GM12878 (cell line): ENCODE measurements at regions of chr15 and their contacts with region 1.

Region 1: GRCh38 chr15:97909291-97909891 is 51.1 kb upstream of the ARRDC4 start:
- DNase-seq: no peak
- ATAC-seq: peak; percentile 75
- H3K4me3 ChIP-seq: no peak overlapping the region
- H3K27ac ChIP-seq: no peak overlapping the region
- H3K4me1 ChIP-seq: no peaks in the 10 kb centered on the region
- H3K27me3 ChIP-seq: no peaks in the 10 kb centered on the region
- CTCF ChIP-seq: peak; percentile 65 to 75 (median 73); a peak in 5 of 6 replicates
- EP300 ChIP-seq: no peak
- POLR2A ChIP-seq: no peak
- RAD21 ChIP-seq: peak; percentile 52

Region 2: DNA sequence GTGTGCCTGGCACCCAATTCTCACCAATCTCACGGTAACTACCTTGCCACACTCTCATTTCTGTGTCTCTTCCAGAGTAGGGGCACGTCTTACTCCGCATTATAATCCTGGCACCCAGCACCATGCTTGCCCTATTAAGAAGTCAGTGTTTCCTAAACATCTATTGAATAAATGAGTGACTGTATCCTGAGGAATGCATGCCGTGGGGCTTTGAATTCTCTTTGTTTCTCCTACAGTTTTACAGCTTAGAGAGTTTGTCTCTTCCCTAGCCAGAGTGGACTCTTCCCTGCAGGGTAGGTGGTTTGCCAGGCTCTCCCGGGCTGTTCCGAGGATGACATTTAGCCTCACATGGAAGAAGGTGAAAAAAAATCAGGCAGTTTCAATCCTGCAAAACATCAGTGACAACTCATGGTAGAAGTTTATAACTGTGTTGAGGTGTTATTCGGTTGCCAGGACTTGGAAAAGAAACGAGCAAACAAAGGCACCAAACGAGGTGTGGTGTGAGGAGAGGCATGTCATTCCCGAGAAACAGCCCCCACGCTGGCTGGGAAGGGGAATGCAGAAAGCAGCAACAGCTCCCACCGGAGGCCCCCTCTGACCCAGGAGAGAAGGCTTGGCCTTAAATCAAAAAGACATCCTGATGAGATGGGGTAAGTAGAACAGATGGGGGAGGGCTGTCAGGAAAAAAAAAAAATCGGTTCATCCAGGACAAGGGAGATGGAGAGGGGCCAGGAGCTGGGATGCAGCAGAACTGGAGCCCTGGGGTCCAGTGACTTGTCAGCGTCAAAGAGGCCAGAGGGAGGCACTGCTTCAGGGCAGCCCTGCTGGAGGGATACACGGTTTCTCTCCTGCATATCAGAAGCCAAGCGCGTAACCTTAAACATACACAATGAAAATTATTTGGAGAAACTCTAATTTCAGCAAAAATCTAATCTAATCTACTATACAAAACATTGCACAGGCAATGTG is 117.3 kb before region 1 on chr15:
- CTCF ChIA-PET with region 1: no interaction called
- POLR2A ChIA-PET with region 1: no interaction called
- RAD21 ChIA-PET with region 1: no interaction called
- SMC1A ChIA-PET with region 1: no interaction called
- in situ Hi-C with region 1: no loop called
- intact Hi-C with region 1: no loop called
- DNase-seq: no peak
- ATAC-seq: no peak
- H3K4me3 ChIP-seq: no peak overlapping the region
- H3K27ac ChIP-seq: no peak overlapping the region
- H3K4me1 ChIP-seq: no peaks in the 10 kb centered on the region
- H3K27me3 ChIP-seq: no peaks in the 10 kb centered on the region
- CTCF ChIP-seq: no peak
- EP300 ChIP-seq: no peak
- POLR2A ChIP-seq: no peak
- RAD21 ChIP-seq: no peak

Region 3: GRCh38 chr15:97849183-97849582 is 60.2 kb before region 1 on chr15:
- CTCF ChIA-PET with region 1: no interaction called
- POLR2A ChIA-PET with region 1: no interaction called
- RAD21 ChIA-PET with region 1: no interaction called
- SMC1A ChIA-PET with region 1: no interaction called
- in situ Hi-C with region 1: no loop called
- intact Hi-C with region 1: loop called (anchors 10 kb)
- DNase-seq: no peak
- ATAC-seq: no peak
- H3K4me3 ChIP-seq: no peak overlapping the region
- H3K27ac ChIP-seq: no peak overlapping the region
- H3K4me1 ChIP-seq: no peaks in the 10 kb centered on the region
- H3K27me3 ChIP-seq: no peaks in the 10 kb centered on the region
- CTCF ChIP-seq: no peak
- EP300 ChIP-seq: no peak
- POLR2A ChIP-seq: no peak
- RAD21 ChIP-seq: no peak

Region 4: GRCh38 chr15:98085003-98085639 is 175.7 kb after region 1 on chr15:
- CTCF ChIA-PET with region 1: interaction called, 7 read pairs
- POLR2A ChIA-PET with region 1: no interaction called
- RAD21 ChIA-PET with region 1: no interaction called
- SMC1A ChIA-PET with region 1: no interaction called
- in situ Hi-C with region 1: no loop called
- intact Hi-C with region 1: loop called (anchors 1 kb)
- DNase-seq: no peak
- ATAC-seq: no peak
- H3K4me3 ChIP-seq: no peak overlapping the region
- H3K27ac ChIP-seq: no peak overlapping the region
- H3K4me1 ChIP-seq: no peaks in the 10 kb centered on the region
- H3K27me3 ChIP-seq: no peaks in the 10 kb centered on the region
- CTCF ChIP-seq: peak; percentile 45 to 50 (median 45); a peak in 5 of 6 replicates
- EP300 ChIP-seq: no peak
- POLR2A ChIP-seq: no peak
- RAD21 ChIP-seq: no peak

Region 5: DNA sequence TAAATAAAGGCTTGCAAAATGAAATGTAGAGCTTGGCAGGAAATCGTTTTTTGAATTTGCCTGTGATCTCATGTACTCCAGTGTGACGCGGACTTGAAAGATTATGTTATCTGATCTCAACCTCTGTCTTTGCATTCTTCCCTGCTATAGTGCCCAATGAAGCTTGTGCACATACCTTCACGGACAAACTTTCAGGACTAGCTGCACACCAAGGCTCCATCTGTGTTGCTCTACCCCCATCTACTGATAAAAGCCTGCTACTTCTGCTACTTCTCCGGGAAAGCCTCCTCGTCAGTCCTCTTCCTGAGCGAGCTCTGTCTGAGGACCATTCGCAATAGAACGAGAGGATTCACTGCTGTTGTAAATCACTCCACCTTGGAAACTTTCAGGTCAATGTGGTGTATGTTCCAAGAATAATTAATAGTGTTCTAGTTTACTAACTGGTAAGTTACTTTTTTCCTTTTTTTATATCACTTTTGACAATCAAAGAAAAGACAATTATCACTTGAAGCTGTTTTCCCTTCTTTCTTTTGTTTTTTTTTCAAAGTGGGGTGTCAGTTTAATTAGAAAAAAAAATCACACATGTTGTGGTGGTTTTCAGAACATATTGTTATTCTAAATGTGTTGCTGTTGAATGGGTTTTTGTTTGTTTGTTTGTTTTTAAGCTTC is 268.7 kb after region 1 on chr15:
- CTCF ChIA-PET with region 1: interaction called, 4 read pairs
- POLR2A ChIA-PET with region 1: no interaction called
- RAD21 ChIA-PET with region 1: interaction called, 3 read pairs
- SMC1A ChIA-PET with region 1: no interaction called
- in situ Hi-C with region 1: no loop called
- intact Hi-C with region 1: loop called (anchors 1 kb)
- DNase-seq: no peak
- ATAC-seq: no peak
- H3K4me3 ChIP-seq: no peak overlapping the region
- H3K27ac ChIP-seq: no peak overlapping the region
- H3K4me1 ChIP-seq: no peaks in the 10 kb centered on the region
- H3K27me3 ChIP-seq: no peaks in the 10 kb centered on the region
- CTCF ChIP-seq: peak; percentile 20 to 44 (median 28); a peak in 3 of 6 replicates
- EP300 ChIP-seq: no peak
- POLR2A ChIP-seq: no peak
- RAD21 ChIP-seq: peak; percentile 55

Region 6: GRCh38 chr15:98292442-98293240 is 383.2 kb after region 1 on chr15:
- CTCF ChIA-PET with region 1: interaction called, 5 read pairs
- POLR2A ChIA-PET with region 1: no interaction called
- RAD21 ChIA-PET with region 1: interaction called, 3 read pairs
- SMC1A ChIA-PET with region 1: no interaction called
- in situ Hi-C with region 1: no loop called
- intact Hi-C with region 1: loop called (anchors 2 kb)
- DNase-seq: no peak
- ATAC-seq: peak; percentile 94
- H3K4me3 ChIP-seq: no peak overlapping the region
- H3K27ac ChIP-seq: no peak overlapping the region
- H3K4me1 ChIP-seq: no peaks in the 10 kb centered on the region
- H3K27me3 ChIP-seq: no peaks in the 10 kb centered on the region
- CTCF ChIP-seq: peak; percentile 57 to 86 (median 60)
- EP300 ChIP-seq: no peak
- POLR2A ChIP-seq: no peak
- RAD21 ChIP-seq: 0 out of 2 replicates have a peak, but pooled peaks have one; percentile 4

Region 7: GRCh38 chr15:98421419-98422129 is 512.2 kb after region 1 on chr15:
- CTCF ChIA-PET with region 1: no interaction called
- POLR2A ChIA-PET with region 1: no interaction called
- RAD21 ChIA-PET with region 1: no interaction called
- SMC1A ChIA-PET with region 1: no interaction called
- in situ Hi-C with region 1: loop called (anchors 10 kb)
- intact Hi-C with region 1: loop called (anchors 5 kb)
- DNase-seq: no peak
- ATAC-seq: peak; percentile 95
- H3K4me3 ChIP-seq: no peak overlapping the region
- H3K27ac ChIP-seq: no peak overlapping the region
- H3K4me1 ChIP-seq: no peaks in the 10 kb centered on the region
- H3K27me3 ChIP-seq: peaks cover 0 to 6% of the 10 kb centered on the region in 2 experiments; a peak in 3 of 4 replicates
- CTCF ChIP-seq: peak; percentile 83 to 94 (median 87)
- EP300 ChIP-seq: no peak
- POLR2A ChIP-seq: no peak
- RAD21 ChIP-seq: peak; percentile 77

Region 8: DNA sequence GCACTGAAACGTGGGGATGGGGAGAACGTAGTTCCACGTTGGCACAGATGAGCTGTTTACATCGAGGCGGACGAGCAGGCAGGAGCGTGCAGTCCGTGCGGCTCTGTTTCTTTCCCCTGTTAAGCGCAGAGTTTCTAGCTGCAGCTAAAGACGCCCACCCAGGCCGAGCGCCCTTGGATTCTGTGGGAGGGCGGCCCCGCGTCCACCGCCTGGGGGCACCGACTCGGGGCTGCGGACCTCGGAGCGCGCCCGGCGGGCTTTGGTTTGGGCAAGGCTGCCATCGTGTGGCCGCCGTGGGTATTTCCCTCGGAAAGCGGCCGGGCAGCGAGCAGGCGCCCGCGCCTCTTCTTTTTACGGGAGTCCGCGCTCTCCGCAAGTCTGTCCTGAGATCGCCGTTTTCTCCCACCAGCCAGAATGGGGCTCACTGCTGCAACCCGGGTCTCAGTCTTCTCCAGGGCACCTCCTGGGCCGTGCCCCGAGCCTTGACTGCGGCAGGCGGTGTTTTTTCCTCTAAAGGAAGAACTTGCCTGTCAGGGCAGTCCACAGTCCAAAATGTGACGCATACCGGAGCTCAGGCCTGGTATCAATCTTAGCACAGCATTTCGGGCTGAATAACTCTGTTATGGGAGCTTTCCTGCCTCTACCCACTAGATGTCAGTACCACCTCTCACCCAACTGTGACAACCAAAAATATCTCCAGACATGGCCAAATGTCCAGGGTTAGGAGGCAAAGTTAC is 519.0 kb after region 1 on chr15:
- CTCF ChIA-PET with region 1: no interaction called
- POLR2A ChIA-PET with region 1: no interaction called
- RAD21 ChIA-PET with region 1: no interaction called
- SMC1A ChIA-PET with region 1: no interaction called
- in situ Hi-C with region 1: loop called (anchors 10 kb)
- intact Hi-C with region 1: loop called (anchors 5 kb)
- DNase-seq: no peak
- ATAC-seq: peak; percentile 96
- H3K4me3 ChIP-seq: no peak overlapping the region
- H3K27ac ChIP-seq: no peak overlapping the region
- H3K4me1 ChIP-seq: no peaks in the 10 kb centered on the region
- H3K27me3 ChIP-seq: peaks cover 0 to 4% of the 10 kb centered on the region in 2 experiments; a peak in 2 of 4 replicates
- CTCF ChIP-seq: peak; percentile 59 to 74 (median 60)
- EP300 ChIP-seq: no peak
- POLR2A ChIP-seq: no peak
- RAD21 ChIP-seq: peak; percentile 37